ENCODE measurements at regions of chr1 and their contacts with region 1.

Region 1: GRCh38 chr1:156659994-156660751 is 17.0 kb downstream of the NES start:
- DNase-seq: peak; percentile 91 to 95
- H3K4me3 ChIP-seq: peak overlapping the region in 2 of 3 donors; percentile 34 to 37
- H3K27ac ChIP-seq: peak overlapping the region; percentile 86 to 94
- H3K4me1 ChIP-seq: peaks cover 15 to 47% of the 10 kb centered on the region in 2 donors
- H3K27me3 ChIP-seq: no peaks in the 10 kb centered on the region
- CTCF ChIP-seq: peak; percentile 96 to 99 (median 98)
- POLR2A ChIP-seq: no peak

Region 2: GRCh38 chr1:156499842-156500546 is 160.2 kb before region 1 on chr1:
- intact Hi-C with region 1: loop called (anchors 10 kb)
- DNase-seq: no peak
- H3K4me3 ChIP-seq: peak overlapping the region; percentile 90 to 98 (median 94)
- H3K27ac ChIP-seq: peak overlapping the region; percentile 98 to 100
- H3K4me1 ChIP-seq: peaks cover 13 to 49% of the 10 kb centered on the region in 2 donors
- H3K27me3 ChIP-seq: no peaks in the 10 kb centered on the region
- CTCF ChIP-seq: peak in 1 of 3 donors; percentile 18
- POLR2A ChIP-seq: no peak

Region 3: GRCh38 chr1:156583821-156584622 is 76.2 kb before region 1 on chr1:
- intact Hi-C with region 1: loop called (anchors 10 kb)
- DNase-seq: peak in 1 of 2 donors; percentile 57
- H3K4me3 ChIP-seq: no peak overlapping the region
- H3K27ac ChIP-seq: no peak overlapping the region
- H3K4me1 ChIP-seq: no peaks in the 10 kb centered on the region
- H3K27me3 ChIP-seq: no peaks in the 10 kb centered on the region
- CTCF ChIP-seq: peak; percentile 87 to 92 (median 89)
- POLR2A ChIP-seq: no peak

Region 4: DNA sequence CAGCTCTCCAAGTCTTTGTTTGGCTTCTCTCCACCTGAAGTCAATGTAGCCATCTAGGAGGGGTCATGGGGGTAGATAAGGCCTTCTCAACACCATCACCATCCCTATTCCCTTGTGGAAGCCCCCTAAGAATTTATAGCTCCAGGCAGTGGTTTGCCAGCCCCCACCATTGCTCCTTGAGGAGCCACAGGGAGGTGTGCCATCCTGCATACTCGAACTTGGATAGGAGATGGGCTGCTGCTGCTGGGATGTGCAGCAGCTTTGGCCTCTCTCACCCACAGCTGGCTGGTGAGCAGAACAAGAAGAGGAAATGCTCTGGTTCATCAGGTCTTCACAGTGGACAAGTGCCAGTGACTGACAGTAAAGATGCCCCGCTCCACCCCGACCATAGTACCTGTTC is 63.7 kb before region 1 on chr1:
- intact Hi-C with region 1: no loop called
- DNase-seq: no peak
- H3K4me3 ChIP-seq: no peak overlapping the region
- H3K27ac ChIP-seq: no peak overlapping the region
- H3K4me1 ChIP-seq: peaks cover 6 to 7% of the 10 kb centered on the region in 2 donors
- H3K27me3 ChIP-seq: no peaks in the 10 kb centered on the region
- CTCF ChIP-seq: no peak
- POLR2A ChIP-seq: no peak

Region 5: GRCh38 chr1:156625436-156626078 is 34.6 kb before region 1 on chr1:
- intact Hi-C with region 1: no loop called
- DNase-seq: no peak
- H3K4me3 ChIP-seq: peak overlapping the region; percentile 33 to 71 (median 45)
- H3K27ac ChIP-seq: no peak overlapping the region
- H3K4me1 ChIP-seq: peaks cover 11 to 16% of the 10 kb centered on the region in 2 donors
- H3K27me3 ChIP-seq: peaks cover 15 to 42% of the 10 kb centered on the region in 2 donors
- CTCF ChIP-seq: peak; percentile 77 to 90 (median 81)
- POLR2A ChIP-seq: no peak